ENCODE measurements at regions of chr19 and their contacts with region 1.

Region 1: GRCh38 chr19:44643605-44644401 is at the start of gene PVR:
- DNase-seq: peak; percentile 75 to 89 (median 82)
- ATAC-seq: peak; percentile 61 to 94 (median 92)
- H3K4me3 ChIP-seq: peak within 1 kb of the TSS; percentile 59 to 95 (median 80)
- H3K27ac ChIP-seq: peak within 1 kb of the TSS; percentile 57 to 96 (median 88)
- H3K4me1 ChIP-seq: peaks cover 6 to 44% (median 32%) of the 10 kb centered on the region in 12 donors
- H3K27me3 ChIP-seq: no peaks in the 10 kb centered on the region
- CTCF ChIP-seq: peak in 1 of 12 donors; percentile 20
- POLR2A ChIP-seq: peak in 1 of 2 donors; percentile 86
- total RNA-seq, gene PVR: 33.7 to 140 (median 49.1) TPM

Region 2: DNA sequence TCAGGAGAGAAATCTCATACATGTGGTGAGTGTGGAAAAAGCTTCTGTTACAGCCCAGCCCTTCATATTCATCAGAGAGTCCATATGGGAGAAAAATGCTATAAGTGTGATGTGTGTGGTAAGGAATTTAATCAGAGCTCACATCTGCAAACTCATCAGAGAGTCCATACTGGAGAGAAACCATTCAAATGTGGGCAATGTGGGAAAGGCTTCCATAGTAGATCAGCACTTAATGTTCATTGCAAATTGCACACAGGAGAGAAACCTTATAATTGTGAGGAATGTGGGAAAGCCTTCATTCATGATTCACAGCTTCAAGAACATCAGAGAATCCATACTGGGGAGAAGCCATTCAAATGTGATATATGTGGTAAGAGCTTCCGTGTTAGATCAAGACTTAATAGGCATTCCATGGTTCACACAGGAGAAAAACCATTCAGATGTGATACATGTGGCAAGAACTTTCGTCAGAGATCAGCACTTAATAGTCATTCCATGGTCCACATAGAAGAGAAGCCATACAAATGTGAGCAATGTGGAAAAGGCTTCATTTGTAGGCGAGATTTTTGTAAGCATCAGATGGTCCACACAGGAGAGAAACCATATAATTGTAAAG is 677.6 kb before region 1 on chr19:
- intact Hi-C with region 1: no loop called
- DNase-seq: no peak
- ATAC-seq: no peak
- H3K4me3 ChIP-seq: no peak overlapping the region
- H3K27ac ChIP-seq: no peak overlapping the region
- H3K4me1 ChIP-seq: no peaks in the 10 kb centered on the region
- H3K27me3 ChIP-seq: no peaks in the 10 kb centered on the region
- CTCF ChIP-seq: no peak
- POLR2A ChIP-seq: no peak

Region 3: GRCh38 chr19:44587963-44588770 is 55.6 kb before region 1 on chr19:
- intact Hi-C with region 1: loop called in 1 of 10 experiments (anchors 2 kb)
- DNase-seq: no peak
- ATAC-seq: peak in 2 of 4 donors; percentile 35 to 38
- H3K4me3 ChIP-seq: no peak overlapping the region
- H3K27ac ChIP-seq: peak overlapping the region in 4 of 12 donors; percentile 33 to 67 (median 52)
- H3K4me1 ChIP-seq: peaks cover 0 to 22% (median 8%) of the 10 kb centered on the region in 12 donors
- H3K27me3 ChIP-seq: no peaks in the 10 kb centered on the region
- CTCF ChIP-seq: peak in 6 of 12 donors; percentile 5 to 38 (median 30)
- POLR2A ChIP-seq: no peak

Region 4: DNA sequence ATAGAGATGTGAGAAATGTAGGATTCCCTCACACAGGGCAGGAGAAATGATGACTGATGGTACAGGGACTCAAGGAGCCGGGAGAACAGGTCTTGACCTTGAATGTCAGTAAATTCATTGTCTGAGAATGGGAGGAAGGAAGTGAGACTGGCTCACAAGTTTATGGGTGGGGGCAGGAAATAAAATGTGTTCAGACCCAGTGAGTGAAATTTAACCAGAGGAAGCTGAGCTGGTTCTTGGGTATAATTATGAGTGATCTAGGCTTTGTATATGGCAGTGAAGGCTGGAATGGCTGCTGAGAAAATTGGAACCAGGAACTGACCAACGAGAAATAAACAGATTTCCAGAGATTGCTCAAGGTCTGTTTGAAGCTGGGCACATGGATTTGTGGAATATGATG is 36.8 kb before region 1 on chr19:
- intact Hi-C with region 1: loop called in 2 of 10 experiments (anchors 5 kb)
- DNase-seq: peak in 2 of 5 donors; percentile 25 to 34
- ATAC-seq: peak; percentile 73 to 86 (median 82)
- H3K4me3 ChIP-seq: no peak overlapping the region
- H3K27ac ChIP-seq: peak overlapping the region; percentile 25 to 80 (median 68)
- H3K4me1 ChIP-seq: peaks cover 0 to 37% (median 17%) of the 10 kb centered on the region in 12 donors
- H3K27me3 ChIP-seq: no peaks in the 10 kb centered on the region
- CTCF ChIP-seq: no peak
- POLR2A ChIP-seq: no peak

Measured in heart left ventricle (tissue), 16 donors.